B cell (primary cell): ENCODE measurements at regions of chr2 and their contacts with region 1.

Region 1: DNA sequence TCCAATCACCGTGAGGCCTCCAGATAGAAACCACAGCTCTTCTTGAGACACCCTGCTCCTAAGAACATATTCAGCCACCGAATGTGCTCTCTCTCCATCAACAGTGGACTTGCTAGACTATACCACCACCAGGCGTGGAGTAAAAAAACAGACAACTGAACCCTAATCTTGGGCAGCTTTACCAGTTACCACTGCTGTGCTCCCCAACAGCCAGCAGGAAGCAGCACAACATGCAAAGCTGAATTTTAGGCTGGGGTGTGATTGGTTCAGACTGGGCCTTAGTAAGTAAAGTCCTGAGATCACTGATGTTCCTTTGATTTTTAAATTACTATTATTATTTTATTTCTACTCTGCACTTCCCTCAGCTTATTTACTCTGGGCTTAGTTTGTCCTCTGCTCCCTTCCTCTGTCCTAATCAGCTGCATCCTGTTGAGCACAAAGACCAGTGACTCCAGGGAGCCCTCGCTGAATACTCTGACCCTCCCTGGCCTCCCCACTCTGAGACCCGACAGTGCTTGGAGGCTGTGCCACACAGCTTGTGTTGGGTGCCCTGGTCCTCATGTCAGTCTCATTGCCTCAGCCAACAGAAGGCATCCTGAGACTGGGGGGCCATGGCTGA is 21.9 kb downstream of the MRPL35 start:
- DNase-seq: peak; percentile 80
- ATAC-seq: peak; percentile 77
- H3K4me3 ChIP-seq: no peak overlapping the region
- H3K4me3 Mint-ChIP-seq: no peak overlapping the region
- H3K27ac ChIP-seq: no peak overlapping the region
- H3K27ac Mint-ChIP-seq: no peak overlapping the region
- H3K4me1 ChIP-seq: peaks cover 16 to 21% of the 10 kb centered on the region in 2 donors
- H3K4me1 Mint-ChIP-seq: peaks cover 27% of the 10 kb centered on the region
- H3K27me3 ChIP-seq: no peaks in the 10 kb centered on the region
- H3K27me3 Mint-ChIP-seq: no peaks in the 10 kb centered on the region
- CTCF ChIP-seq: peak; percentile 98

Region 2: DNA sequence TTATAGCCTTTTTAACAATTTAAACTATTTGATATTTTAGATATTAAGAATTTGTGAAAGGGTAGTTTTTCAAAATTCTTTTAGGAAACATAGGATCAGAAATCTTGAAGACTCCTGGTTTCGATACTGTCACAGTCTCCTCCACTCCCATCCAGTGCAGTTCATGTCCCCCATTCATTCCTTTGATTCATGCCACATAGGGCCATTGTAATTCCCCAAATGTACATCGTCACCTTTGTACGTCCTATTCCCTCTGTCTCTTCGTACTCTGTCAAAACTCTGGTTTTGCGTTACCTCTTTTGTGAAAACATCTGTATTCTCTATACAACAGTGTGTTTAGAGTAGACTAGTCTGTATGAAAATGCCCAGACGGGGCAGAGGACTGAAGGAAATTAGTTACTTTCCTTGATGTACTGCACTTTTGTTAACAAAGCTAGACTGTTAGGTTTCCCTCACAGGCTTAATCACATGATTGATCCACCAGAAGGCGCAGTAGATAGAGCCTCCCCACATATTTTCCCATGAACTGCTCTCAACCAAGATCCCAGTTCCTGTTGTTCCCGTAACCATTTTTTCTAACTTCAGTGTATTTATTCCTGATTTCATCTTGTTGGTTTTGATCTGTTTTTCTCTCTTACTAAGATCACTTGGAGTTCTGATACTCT is 19.4 kb before region 1 on chr2:
- CTCF ChIA-PET with region 1: interaction called, 18 read pairs
- POLR2A ChIA-PET with region 1: no interaction called
- intact Hi-C with region 1: no loop called
- DNase-seq: no peak
- ATAC-seq: no peak
- H3K4me3 ChIP-seq: no peak overlapping the region
- H3K4me3 Mint-ChIP-seq: peak overlapping the region; percentile 3
- H3K27ac ChIP-seq: no peak overlapping the region
- H3K27ac Mint-ChIP-seq: no peak overlapping the region
- H3K4me1 ChIP-seq: peaks cover 11 to 18% of the 10 kb centered on the region in 2 donors
- H3K4me1 Mint-ChIP-seq: peaks cover 29% of the 10 kb centered on the region
- H3K27me3 ChIP-seq: no peaks in the 10 kb centered on the region
- H3K27me3 Mint-ChIP-seq: no peaks in the 10 kb centered on the region
- CTCF ChIP-seq: no peak

Region 3: DNA sequence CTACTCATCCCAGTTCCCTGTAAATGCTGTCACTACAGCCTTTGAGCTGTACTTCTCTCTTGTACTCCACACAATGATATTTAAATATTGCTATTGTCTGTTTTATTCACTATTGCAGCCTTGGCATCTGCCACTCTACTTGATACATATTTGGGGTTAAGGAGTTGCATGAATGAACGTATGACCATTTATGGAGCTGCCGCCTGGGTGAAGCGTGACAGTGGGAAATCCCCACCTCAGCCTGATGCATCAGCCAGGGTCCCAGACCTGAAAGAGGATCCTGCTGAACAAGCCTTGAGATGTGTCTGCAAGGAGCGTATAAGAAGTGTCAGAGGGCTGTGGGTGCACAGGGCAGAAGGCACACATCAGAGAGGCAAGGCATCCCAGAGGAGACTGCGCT is 17.2 kb after region 1 on chr2:
- CTCF ChIA-PET with region 1: interaction called, 20 read pairs
- POLR2A ChIA-PET with region 1: interaction called, 3 read pairs
- intact Hi-C with region 1: loop called (anchors 1 kb)
- DNase-seq: peak; percentile 92
- ATAC-seq: peak; percentile 98
- H3K4me3 ChIP-seq: no peak overlapping the region
- H3K4me3 Mint-ChIP-seq: peak overlapping the region; percentile 32
- H3K27ac ChIP-seq: no peak overlapping the region
- H3K27ac Mint-ChIP-seq: peak overlapping the region; percentile 67
- H3K4me1 ChIP-seq: peaks cover 56 to 57% of the 10 kb centered on the region in 2 donors
- H3K4me1 Mint-ChIP-seq: peaks cover 53% of the 10 kb centered on the region
- H3K27me3 ChIP-seq: no peaks in the 10 kb centered on the region
- H3K27me3 Mint-ChIP-seq: no peaks in the 10 kb centered on the region
- CTCF ChIP-seq: no peak

Region 4: GRCh38 chr2:86243950-86244733 is 23.0 kb after region 1 on chr2:
- CTCF ChIA-PET with region 1: interaction called, 13 read pairs
- POLR2A ChIA-PET with region 1: no interaction called
- intact Hi-C with region 1: no loop called
- DNase-seq: peak; percentile 65
- ATAC-seq: peak; percentile 56
- H3K4me3 ChIP-seq: peak overlapping the region in 1 of 5 experiments; percentile 14
- H3K4me3 Mint-ChIP-seq: peak overlapping the region; percentile 23
- H3K27ac ChIP-seq: peak overlapping the region in 1 of 2 donors; percentile 57
- H3K27ac Mint-ChIP-seq: peak overlapping the region; percentile 42
- H3K4me1 ChIP-seq: peaks cover 48 to 50% of the 10 kb centered on the region in 2 donors
- H3K4me1 Mint-ChIP-seq: peaks cover 56% of the 10 kb centered on the region
- H3K27me3 ChIP-seq: no peaks in the 10 kb centered on the region
- H3K27me3 Mint-ChIP-seq: no peaks in the 10 kb centered on the region
- CTCF ChIP-seq: peak; percentile 22

Region 5: GRCh38 chr2:86298411-86299379 is 77.5 kb after region 1 on chr2:
- CTCF ChIA-PET with region 1: interaction called, 69 read pairs
- POLR2A ChIA-PET with region 1: no interaction called
- intact Hi-C with region 1: loop called (anchors 1 kb)
- DNase-seq: no peak
- ATAC-seq: no peak
- H3K4me3 ChIP-seq: no peak overlapping the region
- H3K4me3 Mint-ChIP-seq: no peak overlapping the region
- H3K27ac ChIP-seq: no peak overlapping the region
- H3K27ac Mint-ChIP-seq: no peak overlapping the region
- H3K4me1 ChIP-seq: no peaks in the 10 kb centered on the region
- H3K4me1 Mint-ChIP-seq: no peaks in the 10 kb centered on the region
- H3K27me3 ChIP-seq: peaks cover 0 to 22% (median 1%) of the 10 kb centered on the region in 4 experiments
- H3K27me3 Mint-ChIP-seq: peaks cover 33% of the 10 kb centered on the region
- CTCF ChIP-seq: no peak

Region 6: DNA sequence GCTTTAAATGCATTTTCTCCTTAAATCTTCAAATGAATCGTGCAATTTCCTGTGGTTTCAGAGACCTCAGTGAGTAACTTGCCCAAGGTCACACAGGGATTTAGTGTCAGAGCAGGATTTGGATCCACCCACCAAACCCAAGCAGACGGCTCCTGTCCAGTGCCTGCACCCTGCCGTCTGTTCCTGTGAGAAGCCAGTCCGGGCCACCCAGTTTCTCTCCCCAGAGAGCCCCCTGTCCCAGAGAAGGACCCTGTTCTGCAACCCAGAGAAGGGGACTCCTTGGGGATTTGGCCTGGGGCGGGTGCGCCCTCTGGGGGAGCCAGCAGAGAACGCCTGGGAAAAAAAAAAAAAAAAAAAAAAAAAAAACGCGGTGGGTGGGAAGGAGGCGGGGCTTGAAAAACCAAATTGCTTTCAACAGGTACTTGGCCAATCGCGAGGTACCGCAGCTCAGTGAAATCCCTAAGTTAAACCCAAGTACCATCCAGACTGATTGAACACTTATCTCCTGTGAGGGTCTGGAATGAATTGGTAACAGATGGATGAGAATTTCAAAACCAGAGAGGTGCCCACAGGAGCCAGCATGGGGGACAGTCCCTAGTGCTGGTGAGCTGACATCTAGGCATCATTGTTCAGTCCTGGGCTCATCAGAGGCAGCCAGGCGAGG is 147.1 kb after region 1 on chr2:
- CTCF ChIA-PET with region 1: interaction called, 47 read pairs
- POLR2A ChIA-PET with region 1: no interaction called
- intact Hi-C with region 1: loop called (anchors 1 kb)
- DNase-seq: peak; percentile 70
- ATAC-seq: peak; percentile 81
- H3K4me3 ChIP-seq: peak overlapping the region in 1 of 5 experiments; percentile 24
- H3K4me3 Mint-ChIP-seq: peak overlapping the region; percentile 48
- H3K27ac ChIP-seq: no peak overlapping the region
- H3K27ac Mint-ChIP-seq: no peak overlapping the region
- H3K4me1 ChIP-seq: peaks cover 3 to 16% of the 10 kb centered on the region in 2 donors
- H3K4me1 Mint-ChIP-seq: peaks cover 14% of the 10 kb centered on the region
- H3K27me3 ChIP-seq: no peaks in the 10 kb centered on the region
- H3K27me3 Mint-ChIP-seq: no peaks in the 10 kb centered on the region
- CTCF ChIP-seq: peak; percentile 63

Region 7: DNA sequence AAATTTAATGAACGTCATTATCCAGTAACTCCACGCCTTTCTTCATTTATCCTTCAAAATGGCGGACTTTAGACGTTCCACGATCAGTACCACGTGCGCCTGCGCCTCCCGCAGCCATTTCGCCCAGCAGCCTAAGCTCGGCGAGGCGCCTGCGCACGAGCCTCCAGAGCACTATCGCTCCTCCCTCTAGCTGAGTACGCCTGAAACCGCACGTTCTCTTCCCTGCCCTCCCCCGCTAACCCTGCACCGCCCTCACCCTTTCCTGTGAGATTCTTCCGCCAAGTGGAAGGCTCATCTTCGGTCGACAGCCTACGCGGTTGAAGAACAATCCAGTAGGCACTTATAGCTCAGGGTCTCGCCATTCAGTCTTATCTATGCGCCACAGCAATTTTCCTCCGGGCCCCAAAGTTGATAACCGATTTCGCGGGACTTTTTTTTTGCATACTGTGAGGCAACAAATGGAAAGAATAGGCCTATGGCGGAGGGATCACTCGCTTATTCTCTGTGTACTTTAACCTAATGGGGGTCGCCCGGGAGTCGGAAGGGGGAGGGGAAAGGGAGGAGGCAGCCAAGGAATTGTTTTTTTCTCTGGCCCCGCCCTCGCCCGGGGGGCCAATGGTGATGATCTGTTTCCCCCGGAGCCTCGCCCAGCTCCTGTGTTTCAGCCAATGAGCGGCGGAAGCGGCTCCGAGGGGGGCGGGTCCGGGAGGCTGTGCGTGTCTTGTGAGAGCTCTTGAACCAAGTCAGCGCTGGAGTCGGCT is 219.6 kb after region 1 on chr2 and contains the start of gene KDM3A:
- CTCF ChIA-PET with region 1: interaction called, 7 read pairs
- POLR2A ChIA-PET with region 1: interaction called, 6 read pairs
- intact Hi-C with region 1: loop called (anchors 5 kb)
- DNase-seq: peak; percentile 99
- ATAC-seq: peak; percentile 81
- H3K4me3 ChIP-seq: peak within 1 kb of the TSS; percentile 81 to 98 (median 84)
- H3K4me3 Mint-ChIP-seq: peak within 1 kb of the TSS; percentile 97
- H3K27ac ChIP-seq: peak within 1 kb of the TSS; percentile 89 to 92
- H3K27ac Mint-ChIP-seq: peak within 1 kb of the TSS; percentile 99
- H3K4me1 ChIP-seq: peaks cover 23 to 26% of the 10 kb centered on the region in 2 donors
- H3K4me1 Mint-ChIP-seq: peaks cover 41% of the 10 kb centered on the region
- H3K27me3 ChIP-seq: peaks cover 0 to 3% (median 0%) of the 10 kb centered on the region in 4 experiments
- H3K27me3 Mint-ChIP-seq: peaks cover 7% of the 10 kb centered on the region
- CTCF ChIP-seq: no peak
- total RNA-seq, gene KDM3A: 99.2 and 107 TPM in 2 replicates